Activated B cell treated with CpG ODN at 0.5 μM for 24 hours (primary cell): ENCODE measurements at regions of chr10 and their contacts with region 1.

Region 1: DNA sequence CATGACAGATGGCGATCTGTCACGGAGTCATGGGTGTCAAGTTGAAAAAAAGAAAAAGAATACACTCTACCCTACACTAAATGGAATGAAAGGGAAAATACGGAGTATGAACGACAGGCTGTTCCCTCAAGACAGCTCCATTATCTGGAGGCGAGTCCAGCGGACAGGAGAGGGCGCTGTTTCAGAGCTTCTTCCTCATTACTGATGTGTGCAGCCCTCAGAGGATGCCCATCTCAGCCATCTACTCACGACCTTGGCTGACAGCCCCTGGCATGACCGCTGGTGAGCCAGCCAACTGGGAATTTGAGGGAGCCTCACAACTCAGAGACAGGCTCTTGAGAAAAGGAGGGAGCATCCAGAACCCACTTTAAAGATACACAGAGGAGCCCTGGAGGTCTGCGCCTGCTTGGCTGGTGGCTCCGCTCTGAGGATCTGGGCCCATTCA is 49.6 kb upstream of the SMNDC1 start:
- DNase-seq: peak; percentile 60
- ATAC-seq: peak; percentile 5
- H3K4me3 Mint-ChIP-seq: peak overlapping the region; percentile 33
- H3K27ac Mint-ChIP-seq: peak overlapping the region; percentile 99
- H3K4me1 Mint-ChIP-seq: peaks cover 72% of the 10 kb centered on the region
- H3K27me3 Mint-ChIP-seq: no peaks in the 10 kb centered on the region
- CTCF ChIP-seq: no peak

Region 2: DNA sequence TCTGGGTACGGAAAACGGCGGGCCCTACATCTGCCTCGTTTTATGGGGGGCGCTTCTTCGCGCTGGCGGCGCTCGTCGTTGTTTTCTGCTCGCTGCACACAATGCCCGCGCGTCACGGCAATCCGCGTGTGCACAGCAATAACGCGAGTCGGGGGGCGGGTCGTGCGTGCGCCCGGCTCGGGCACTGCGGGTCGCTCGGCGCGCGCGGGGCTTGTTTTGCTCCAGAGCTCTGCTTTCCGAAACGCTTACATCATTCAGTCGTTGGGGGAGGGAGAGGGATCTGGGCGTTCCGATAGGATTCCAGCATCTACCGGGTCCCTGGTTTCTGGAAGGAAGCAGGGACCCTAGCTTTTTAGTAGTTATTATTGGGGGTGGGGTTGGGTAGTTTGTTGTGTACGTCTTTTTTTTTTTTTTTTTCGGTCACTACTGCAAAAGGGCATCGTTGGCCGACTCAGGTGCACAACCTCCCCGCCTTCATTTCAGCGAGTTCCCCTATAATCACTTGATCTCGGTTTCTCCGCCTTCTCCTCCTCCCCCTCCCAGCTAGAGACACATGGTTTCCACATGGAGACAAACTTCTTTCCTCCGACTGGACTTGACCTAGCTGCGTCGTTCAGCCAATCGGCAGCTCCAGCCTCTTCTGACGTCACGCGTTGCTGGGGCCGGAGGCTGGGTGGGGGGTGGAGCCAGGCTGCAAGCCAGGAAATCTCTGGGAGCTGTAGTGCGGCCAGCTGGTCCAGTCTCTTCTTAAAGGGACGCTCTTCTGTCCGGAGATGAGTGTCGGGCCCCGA is 143.5 kb before region 1 on chr10:
- CTCF ChIA-PET with region 1: no interaction called
- POLR2A ChIA-PET with region 1: interaction called, 4 read pairs
- intact Hi-C with region 1: loop called (anchors 2 kb)
- DNase-seq: peak; percentile 84
- ATAC-seq: peak; percentile 73
- H3K4me3 Mint-ChIP-seq: peak overlapping the region; percentile 87
- H3K27ac Mint-ChIP-seq: peak overlapping the region; percentile 79
- H3K4me1 Mint-ChIP-seq: peaks cover 55% of the 10 kb centered on the region
- H3K27me3 Mint-ChIP-seq: peaks cover 2% of the 10 kb centered on the region
- CTCF ChIP-seq: no peak

Region 3: GRCh38 chr10:110335314-110336064 is 18.9 kb before region 1 on chr10:
- CTCF ChIA-PET with region 1: interaction called, 11 read pairs
- POLR2A ChIA-PET with region 1: interaction called, 11 read pairs
- intact Hi-C with region 1: no loop called
- DNase-seq: no peak
- ATAC-seq: no peak
- H3K4me3 Mint-ChIP-seq: no peak overlapping the region
- H3K27ac Mint-ChIP-seq: no peak overlapping the region
- H3K4me1 Mint-ChIP-seq: peaks cover 7% of the 10 kb centered on the region
- H3K27me3 Mint-ChIP-seq: no peaks in the 10 kb centered on the region
- CTCF ChIP-seq: no peak

Region 4: GRCh38 chr10:110414563-110415309 is 60.4 kb after region 1 on chr10:
- CTCF ChIA-PET with region 1: interaction called, 49 read pairs
- POLR2A ChIA-PET with region 1: interaction called, 328 read pairs
- intact Hi-C with region 1: loop called (anchors 1 kb)
- DNase-seq: peak; percentile 72
- ATAC-seq: peak; percentile 89
- H3K4me3 Mint-ChIP-seq: peak overlapping the region; percentile 50
- H3K27ac Mint-ChIP-seq: peak overlapping the region; percentile 65
- H3K4me1 Mint-ChIP-seq: peaks cover 71% of the 10 kb centered on the region
- H3K27me3 Mint-ChIP-seq: peaks cover 6% of the 10 kb centered on the region
- CTCF ChIP-seq: no peak

Region 5: DNA sequence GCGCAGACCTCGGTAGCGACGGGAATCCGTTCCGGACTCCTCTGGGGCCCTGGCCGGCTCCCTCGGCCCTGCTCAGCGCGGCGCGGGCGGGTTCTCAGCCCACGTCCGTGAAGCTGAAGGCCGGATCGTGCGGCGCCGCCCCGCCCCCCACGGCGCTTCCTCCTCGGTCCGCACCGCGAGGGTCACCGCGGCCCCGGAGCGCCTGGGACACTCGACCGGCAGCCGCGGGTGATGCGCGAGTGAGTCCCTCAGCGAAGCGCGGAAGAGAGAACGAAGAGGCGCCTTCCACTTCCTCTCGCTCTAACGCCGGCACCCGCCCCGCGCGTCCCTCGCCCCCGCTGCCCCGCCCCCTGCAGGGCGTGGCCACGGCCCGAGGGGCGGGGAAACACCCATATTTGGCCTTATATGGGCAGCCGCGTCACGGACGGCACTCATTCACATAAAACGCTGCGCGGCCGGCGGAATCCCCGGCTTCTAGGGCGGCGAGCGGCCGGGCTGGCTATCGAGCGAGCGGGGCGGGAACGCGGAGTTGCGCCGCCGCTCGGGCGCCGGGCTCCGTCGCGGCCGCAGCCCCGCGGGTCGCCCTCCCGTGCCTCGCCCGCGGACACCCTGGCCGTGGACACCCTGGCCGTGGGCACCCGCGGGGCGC is 143.2 kb after region 1 on chr10 and contains the start of gene DUSP5:
- CTCF ChIA-PET with region 1: interaction called, 39 read pairs
- POLR2A ChIA-PET with region 1: interaction called, 231 read pairs
- intact Hi-C with region 1: loop called (anchors 1 kb)
- DNase-seq: peak; percentile 99
- ATAC-seq: peak; percentile 87
- H3K4me3 Mint-ChIP-seq: peak within 1 kb of the TSS; percentile 90
- H3K27ac Mint-ChIP-seq: peak within 1 kb of the TSS; percentile 77
- H3K4me1 Mint-ChIP-seq: peaks cover 66% of the 10 kb centered on the region
- H3K27me3 Mint-ChIP-seq: peaks cover 3% of the 10 kb centered on the region
- CTCF ChIP-seq: no peak
- total RNA-seq, gene DUSP5: 26.1 and 28.6 TPM in 2 replicates

Region 6: GRCh38 chr10:110671788-110672579 is 317.6 kb after region 1 on chr10:
- CTCF ChIA-PET with region 1: no interaction called
- POLR2A ChIA-PET with region 1: no interaction called
- intact Hi-C with region 1: no loop called
- DNase-seq: peak; percentile 72
- ATAC-seq: peak; percentile 97
- H3K4me3 Mint-ChIP-seq: peak overlapping the region; percentile 90
- H3K27ac Mint-ChIP-seq: peak overlapping the region; percentile 88
- H3K4me1 Mint-ChIP-seq: peaks cover 4% of the 10 kb centered on the region
- H3K27me3 Mint-ChIP-seq: peaks cover 17% of the 10 kb centered on the region
- CTCF ChIP-seq: peak; percentile 52

Region 7: GRCh38 chr10:110843031-110843430 is 488.7 kb after region 1 on chr10:
- CTCF ChIA-PET with region 1: no interaction called
- POLR2A ChIA-PET with region 1: interaction called, 10 read pairs
- intact Hi-C with region 1: loop called (anchors 2 kb)
- DNase-seq: peak; percentile 37
- ATAC-seq: peak; percentile 69
- H3K4me3 Mint-ChIP-seq: peak overlapping the region; percentile 78
- H3K27ac Mint-ChIP-seq: peak overlapping the region; percentile 89
- H3K4me1 Mint-ChIP-seq: peaks cover 77% of the 10 kb centered on the region
- H3K27me3 Mint-ChIP-seq: no peaks in the 10 kb centered on the region
- CTCF ChIP-seq: no peak